ENCODE measurements at regions of chr4 and their contacts with region 1.

Region 1: GRCh38 chr4:83905952-83906351 is 370.0 kb downstream of the GPAT3 start:
- DNase-seq: no peak
- ATAC-seq: peak; percentile 83
- H3K4me3 ChIP-seq: no peak overlapping the region
- H3K27ac ChIP-seq: no peak overlapping the region
- H3K4me1 ChIP-seq: no peaks in the 10 kb centered on the region
- H3K27me3 ChIP-seq: no peaks in the 10 kb centered on the region
- CTCF ChIP-seq: peak; percentile 27 to 64 (median 60); a peak in 5 of 6 replicates
- POLR2A ChIP-seq: no peak
- RAD21 ChIP-seq: peak; percentile 65

Region 2: DNA sequence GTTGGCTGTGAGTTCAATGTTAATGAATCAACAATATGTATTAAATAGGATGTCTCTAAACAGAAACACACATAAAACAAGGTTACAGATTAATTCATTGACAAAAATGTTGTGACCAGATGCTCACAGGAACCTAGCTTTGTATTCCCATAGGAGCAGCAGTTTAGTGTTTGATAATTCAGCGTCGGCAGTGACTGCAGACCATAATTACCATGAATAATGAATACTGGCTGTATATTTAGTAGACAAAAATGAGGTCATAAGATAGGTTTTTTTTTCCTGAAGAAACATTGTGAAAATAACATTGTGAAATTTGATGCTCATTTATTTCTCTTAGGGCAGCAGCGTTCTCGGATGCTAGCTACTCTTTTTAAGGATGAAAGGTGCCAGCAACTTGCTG is 843.2 kb before region 1 on chr4:
- CTCF ChIA-PET with region 1: no interaction called
- POLR2A ChIA-PET with region 1: no interaction called
- RAD21 ChIA-PET with region 1: no interaction called
- intact Hi-C with region 1: no loop called
- DNase-seq: no peak
- ATAC-seq: no peak
- H3K4me3 ChIP-seq: no peak overlapping the region
- H3K27ac ChIP-seq: no peak overlapping the region
- H3K4me1 ChIP-seq: peaks cover 12 to 16% of the 10 kb centered on the region in 2 experiments; a peak in 3 of 4 replicates
- H3K27me3 ChIP-seq: no peaks in the 10 kb centered on the region
- CTCF ChIP-seq: no peak
- POLR2A ChIP-seq: no peak
- RAD21 ChIP-seq: no peak

Region 3: DNA sequence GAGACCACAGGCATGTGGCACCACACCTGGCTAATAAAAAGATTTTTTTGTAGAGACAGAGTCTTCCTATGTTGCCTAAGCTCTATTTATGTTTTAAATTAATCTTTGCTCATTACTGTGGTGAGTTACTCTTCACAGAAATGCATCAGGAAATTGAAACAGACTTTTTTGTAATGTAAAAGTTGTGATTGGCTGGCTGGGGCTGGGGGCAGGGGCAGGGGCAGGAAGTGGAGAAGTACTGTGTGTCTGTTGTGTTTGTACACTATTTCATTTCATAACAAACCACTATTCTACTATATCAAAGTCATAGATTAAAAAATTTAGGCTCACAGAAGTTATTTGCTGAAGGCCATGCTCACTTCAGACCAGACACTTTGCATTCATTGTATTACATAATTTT is 402.0 kb before region 1 on chr4:
- CTCF ChIA-PET with region 1: no interaction called
- POLR2A ChIA-PET with region 1: no interaction called
- RAD21 ChIA-PET with region 1: no interaction called
- intact Hi-C with region 1: no loop called
- DNase-seq: no peak
- ATAC-seq: no peak
- H3K4me3 ChIP-seq: no peak overlapping the region
- H3K27ac ChIP-seq: no peak overlapping the region
- H3K4me1 ChIP-seq: no peaks in the 10 kb centered on the region
- H3K27me3 ChIP-seq: no peaks in the 10 kb centered on the region
- CTCF ChIP-seq: no peak
- POLR2A ChIP-seq: no peak
- RAD21 ChIP-seq: no peak

Region 4: GRCh38 chr4:83751336-83751943 is 154.5 kb before region 1 on chr4:
- CTCF ChIA-PET with region 1: no interaction called
- POLR2A ChIA-PET with region 1: no interaction called
- RAD21 ChIA-PET with region 1: no interaction called
- intact Hi-C with region 1: no loop called
- DNase-seq: peak; percentile 32
- ATAC-seq: peak; percentile 63
- H3K4me3 ChIP-seq: peak overlapping the region in 1 of 2 experiments; percentile 6; a peak in 1 of 4 replicates
- H3K27ac ChIP-seq: no peak overlapping the region
- H3K4me1 ChIP-seq: peaks cover 4 to 9% of the 10 kb centered on the region in 2 experiments; a peak in 3 of 4 replicates
- H3K27me3 ChIP-seq: no peaks in the 10 kb centered on the region
- CTCF ChIP-seq: no peak
- POLR2A ChIP-seq: no peak
- RAD21 ChIP-seq: no peak

Region 5: GRCh38 chr4:83974156-83974780 is 68.3 kb after region 1 on chr4:
- CTCF ChIA-PET with region 1: no interaction called
- POLR2A ChIA-PET with region 1: no interaction called
- RAD21 ChIA-PET with region 1: no interaction called
- intact Hi-C with region 1: no loop called
- DNase-seq: no peak
- ATAC-seq: no peak
- H3K4me3 ChIP-seq: no peak overlapping the region
- H3K27ac ChIP-seq: no peak overlapping the region
- H3K4me1 ChIP-seq: peaks cover 0 to 7% of the 10 kb centered on the region in 2 experiments; a peak in 2 of 4 replicates
- H3K27me3 ChIP-seq: no peaks in the 10 kb centered on the region
- CTCF ChIP-seq: no peak
- POLR2A ChIP-seq: no peak
- RAD21 ChIP-seq: no peak

Region 6: DNA sequence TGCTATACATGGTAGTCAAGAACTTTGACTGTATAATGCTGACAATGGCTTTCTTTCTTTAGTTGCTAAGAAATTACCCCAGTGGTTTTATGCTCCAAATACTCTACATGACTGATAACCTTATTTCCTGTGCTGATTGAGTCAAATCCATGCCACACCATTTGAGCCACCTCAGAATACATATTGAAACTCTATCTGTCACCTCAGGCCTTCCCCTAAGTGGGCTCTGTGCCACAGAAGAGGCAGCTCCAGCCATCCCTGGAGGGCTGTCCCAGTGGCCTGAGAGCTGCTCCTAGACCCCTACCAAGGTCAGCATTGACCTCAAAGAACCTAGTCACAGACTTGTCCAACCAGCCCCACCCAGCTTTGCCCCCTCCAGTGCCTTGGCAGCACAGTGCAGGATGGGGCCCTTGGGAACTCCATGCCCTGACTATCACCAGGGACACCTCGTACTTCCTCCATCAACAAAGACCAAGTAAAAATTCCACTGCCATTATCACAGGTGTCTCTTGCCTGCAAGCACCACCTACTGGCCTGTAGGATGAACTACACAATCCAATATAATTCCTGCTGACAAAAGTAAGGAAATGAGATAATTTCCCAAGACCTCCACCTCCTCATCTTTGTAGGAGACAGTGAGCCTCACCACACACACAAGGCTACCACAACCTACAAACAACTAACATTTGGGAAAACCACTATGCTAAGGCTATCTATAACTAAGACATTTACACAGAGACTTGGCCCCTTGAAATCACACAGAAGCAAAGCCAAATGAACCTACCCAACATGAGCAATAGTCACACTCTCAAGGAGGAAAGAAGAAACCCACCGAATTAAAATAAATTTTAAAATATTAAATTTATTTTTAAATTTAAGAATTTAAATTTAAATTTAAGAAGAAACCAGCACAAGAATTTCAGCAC is 353.2 kb after region 1 on chr4:
- CTCF ChIA-PET with region 1: no interaction called
- POLR2A ChIA-PET with region 1: no interaction called
- RAD21 ChIA-PET with region 1: no interaction called
- intact Hi-C with region 1: loop called (anchors 5 kb)
- DNase-seq: peak; percentile 13
- ATAC-seq: peak; percentile 78
- H3K4me3 ChIP-seq: no peak overlapping the region
- H3K27ac ChIP-seq: no peak overlapping the region
- H3K4me1 ChIP-seq: no peaks in the 10 kb centered on the region
- H3K27me3 ChIP-seq: no peaks in the 10 kb centered on the region
- CTCF ChIP-seq: peak; percentile 48 to 82 (median 76); a peak in 5 of 6 replicates
- POLR2A ChIP-seq: no peak
- RAD21 ChIP-seq: peak; percentile 72

Region 7: GRCh38 chr4:84966383-84967242 is 1060.7 kb after region 1 on chr4 and contains the start of gene WDFY3:
- CTCF ChIA-PET with region 1: no interaction called
- POLR2A ChIA-PET with region 1: no interaction called
- RAD21 ChIA-PET with region 1: no interaction called
- intact Hi-C with region 1: loop called (anchors 10 kb)
- DNase-seq: peak; percentile 71
- ATAC-seq: peak; percentile 89
- H3K4me3 ChIP-seq: peak within 1 kb of the TSS; percentile 56 to 79
- H3K27ac ChIP-seq: peak within 1 kb of the TSS; percentile 88
- H3K4me1 ChIP-seq: peaks cover 4 to 18% of the 10 kb centered on the region in 2 experiments; a peak in 3 of 4 replicates
- H3K27me3 ChIP-seq: no peaks in the 10 kb centered on the region
- CTCF ChIP-seq: no peak
- POLR2A ChIP-seq: peak; percentile 43
- RAD21 ChIP-seq: 0 out of 2 replicates have a peak, but pooled peaks have one; percentile 18
- total RNA-seq, gene WDFY3: 39.9 TPM